Ovary (tissue), 10 donors: ENCODE measurements at regions of chr16 and their contacts with region 1.

Region 1: GRCh38 chr16:52861614-52862022 is 191.1 kb downstream of the CHD9NB start:
- DNase-seq: no peak
- H3K4me3 ChIP-seq: no peak overlapping the region
- H3K27ac ChIP-seq: no peak overlapping the region
- H3K4me1 ChIP-seq: no peaks in the 10 kb centered on the region
- H3K27me3 ChIP-seq: no peaks in the 10 kb centered on the region
- CTCF ChIP-seq: no peak
- EP300 ChIP-seq: no peak
- POLR2A ChIP-seq: no peak

Region 2: GRCh38 chr16:52812678-52813556 is 48.7 kb before region 1 on chr16:
- intact Hi-C with region 1: loop called in 1 of 4 experiments (anchors 5 kb)
- DNase-seq: no peak
- H3K4me3 ChIP-seq: no peak overlapping the region
- H3K27ac ChIP-seq: no peak overlapping the region
- H3K4me1 ChIP-seq: no peaks in the 10 kb centered on the region
- H3K27me3 ChIP-seq: no peaks in the 10 kb centered on the region
- CTCF ChIP-seq: no peak
- EP300 ChIP-seq: no peak
- POLR2A ChIP-seq: no peak

Region 3: DNA sequence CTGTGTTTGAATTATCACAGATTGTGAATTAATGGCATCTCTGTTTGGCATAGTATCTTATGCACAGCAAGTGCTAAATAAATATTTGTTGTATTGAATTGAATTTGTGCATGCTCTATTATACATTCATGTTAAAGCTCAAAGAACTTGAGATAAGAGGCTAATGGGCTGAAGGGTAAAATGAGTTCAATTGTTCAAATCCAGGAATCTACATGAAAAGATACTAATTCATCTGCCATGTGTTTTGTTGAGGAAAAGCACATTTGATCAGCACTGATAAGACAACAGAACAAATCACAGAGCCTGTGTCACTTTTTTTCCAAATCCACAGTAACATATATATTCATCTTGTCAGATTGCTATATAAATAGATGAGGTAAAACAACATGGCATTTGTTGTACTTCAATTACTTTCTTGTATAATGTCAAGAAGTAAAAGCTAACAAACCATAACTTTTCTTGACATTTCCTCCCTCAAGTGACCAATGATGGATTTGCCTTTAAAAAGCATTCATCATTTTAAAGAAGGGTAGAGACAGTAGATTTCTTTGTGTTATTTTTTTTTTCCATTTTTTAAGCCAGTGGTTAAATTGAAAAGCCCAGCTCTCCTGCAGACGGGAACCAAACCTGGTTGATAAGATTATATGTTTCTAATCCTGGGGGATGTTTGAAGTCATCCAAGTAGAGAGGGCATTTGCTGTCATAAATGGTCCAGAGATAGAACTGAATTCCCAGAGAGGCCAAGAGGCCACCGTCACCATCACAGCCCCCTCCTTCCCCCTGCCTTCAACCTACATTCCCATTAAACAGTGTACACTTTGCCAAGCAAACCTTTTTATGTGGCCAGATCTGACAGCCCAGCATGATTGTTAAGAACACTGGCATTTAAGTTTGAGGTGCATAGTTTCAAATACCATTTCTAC is 68.1 kb after region 1 on chr16:
- intact Hi-C with region 1: no loop called
- DNase-seq: no peak
- H3K4me3 ChIP-seq: no peak overlapping the region
- H3K27ac ChIP-seq: no peak overlapping the region
- H3K4me1 ChIP-seq: no peaks in the 10 kb centered on the region
- H3K27me3 ChIP-seq: no peaks in the 10 kb centered on the region
- CTCF ChIP-seq: no peak
- EP300 ChIP-seq: no peak
- POLR2A ChIP-seq: no peak